ENCODE measurements at regions of chrX and their contacts with region 1.

Region 1: DNA sequence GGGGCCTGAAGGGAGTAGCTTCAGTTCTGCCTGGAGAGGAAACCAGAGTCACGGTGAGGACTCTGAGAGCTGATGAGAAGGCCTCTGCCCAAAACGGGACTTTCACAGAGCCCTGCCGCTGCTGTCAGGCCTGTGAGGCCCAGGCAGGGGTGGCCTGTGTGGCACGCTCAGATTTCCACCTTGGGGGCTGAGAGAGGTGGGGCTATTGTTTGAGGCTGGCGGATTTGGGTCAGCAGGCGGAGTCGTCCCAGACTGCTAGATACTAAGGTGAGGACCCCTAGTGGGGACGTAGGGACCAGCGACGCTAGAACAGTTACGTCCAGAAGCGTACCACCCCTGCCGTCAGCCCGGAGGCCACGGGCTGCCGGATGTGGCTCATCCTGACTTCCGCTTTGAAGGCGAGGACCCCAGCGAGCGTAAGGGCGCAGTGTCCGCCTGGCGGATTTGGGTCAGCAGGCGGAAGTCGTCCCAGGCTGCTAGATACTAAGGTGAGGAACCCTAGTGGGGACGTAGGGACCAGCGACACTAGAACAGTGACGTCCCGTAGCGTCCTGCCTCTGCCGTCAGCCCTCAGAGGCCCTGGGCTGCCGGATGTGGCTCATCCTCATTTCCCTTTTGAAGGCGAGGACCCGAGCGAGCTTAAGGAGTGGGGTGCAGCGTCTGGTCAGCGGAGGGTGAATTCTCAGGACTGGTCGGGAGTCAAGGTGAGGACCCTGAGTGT is at the start of gene MAGEB1:
- DNase-seq: no peak
- ATAC-seq: no peak
- H3K4me3 ChIP-seq: no peak within 1 kb of the TSS
- H3K4me3 Mint-ChIP-seq: no peak within 1 kb of the TSS
- H3K27ac ChIP-seq: no peak within 1 kb of the TSS
- H3K27ac Mint-ChIP-seq: no peak within 1 kb of the TSS
- H3K4me1 ChIP-seq: no peaks in the 10 kb centered on the region
- H3K4me1 Mint-ChIP-seq: no peaks in the 10 kb centered on the region
- H3K27me3 ChIP-seq: no peaks in the 10 kb centered on the region
- H3K27me3 Mint-ChIP-seq: peaks cover 0 to 15% of the 10 kb centered on the region in 2 donors
- total RNA-seq, gene MAGEB1: not detected

Region 2: DNA sequence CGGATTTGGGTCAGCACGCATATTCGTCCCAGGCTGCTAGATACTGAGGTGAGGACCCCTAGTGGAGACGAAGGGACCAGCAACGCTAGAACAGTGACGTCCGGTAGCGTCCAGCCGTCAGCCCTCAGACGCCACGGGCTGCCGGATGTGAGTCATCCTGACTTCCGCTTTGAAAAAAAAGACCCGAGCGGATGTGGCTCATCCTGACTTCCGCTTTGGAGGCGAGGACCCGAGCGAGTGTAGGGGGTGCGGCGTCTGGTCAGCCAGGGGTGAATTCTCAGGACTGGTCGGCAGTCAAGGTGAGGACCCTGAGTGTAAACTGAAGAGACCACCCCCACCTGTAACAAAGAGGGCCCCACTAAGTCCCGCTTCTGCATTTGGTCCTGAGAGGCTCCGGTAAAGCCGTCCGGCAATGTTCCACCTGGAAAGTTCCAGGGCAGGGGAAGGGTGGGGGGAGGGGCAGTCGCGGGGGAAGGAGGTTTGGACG is 31.5 kb before region 1 on chrX and contains the start of gene MAGEB2:
- CTCF ChIA-PET with region 1: interaction called in 1 of 2 experiments, 13 read pairs
- POLR2A ChIA-PET with region 1: no interaction called
- DNase-seq: no peak
- ATAC-seq: no peak
- H3K4me3 ChIP-seq: no peak within 1 kb of the TSS
- H3K4me3 Mint-ChIP-seq: no peak within 1 kb of the TSS
- H3K27ac ChIP-seq: no peak within 1 kb of the TSS
- H3K27ac Mint-ChIP-seq: no peak within 1 kb of the TSS
- H3K4me1 ChIP-seq: no peaks in the 10 kb centered on the region
- H3K4me1 Mint-ChIP-seq: no peaks in the 10 kb centered on the region
- H3K27me3 ChIP-seq: no peaks in the 10 kb centered on the region
- H3K27me3 Mint-ChIP-seq: peaks cover 1 to 8% of the 10 kb centered on the region in 2 donors
- total RNA-seq, gene MAGEB2: 0.25 TPM in 1 of 5 donors, not detected in the others

Region 3: DNA sequence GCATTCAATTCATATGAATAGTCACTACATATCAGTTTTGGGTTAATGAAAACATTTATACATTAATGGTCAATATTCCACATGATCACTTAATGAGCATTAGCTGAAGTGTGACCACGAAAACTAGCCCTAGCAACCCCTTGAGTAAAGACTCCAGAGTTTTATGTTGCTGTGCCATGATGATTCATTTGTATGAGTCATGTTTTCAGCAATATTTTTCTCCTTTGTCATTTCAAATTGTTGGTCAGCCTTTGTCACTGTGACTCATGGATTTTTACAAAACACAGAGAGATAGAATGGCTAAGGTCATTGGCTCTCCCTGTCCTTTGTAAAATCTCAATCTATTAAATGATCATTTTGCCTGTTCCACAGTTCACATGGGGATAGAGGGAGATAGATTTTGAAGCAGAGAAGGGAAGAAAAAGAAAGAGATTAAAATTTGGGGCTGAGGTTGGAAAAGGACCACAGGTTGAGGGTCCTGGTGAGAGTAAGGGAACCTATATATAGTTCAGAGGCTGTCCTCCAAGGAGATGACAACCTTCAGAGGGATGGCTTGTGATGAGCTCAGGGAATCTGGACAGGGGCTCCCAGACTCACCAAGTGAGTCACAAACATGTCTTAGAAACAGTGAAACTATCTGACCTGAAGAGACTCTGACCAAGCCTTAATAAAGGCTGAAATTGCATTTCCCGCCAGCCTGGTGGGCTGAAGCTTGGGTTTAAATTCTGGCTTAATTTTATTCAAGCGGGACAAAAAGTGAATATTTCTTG is 36.7 kb after region 1 on chrX:
- CTCF ChIA-PET with region 1: no interaction called
- POLR2A ChIA-PET with region 1: no interaction called
- DNase-seq: no peak
- ATAC-seq: no peak
- H3K4me3 ChIP-seq: no peak overlapping the region
- H3K4me3 Mint-ChIP-seq: no peak overlapping the region
- H3K27ac ChIP-seq: no peak overlapping the region
- H3K27ac Mint-ChIP-seq: no peak overlapping the region
- H3K4me1 ChIP-seq: peaks cover 0 to 9% of the 10 kb centered on the region in 2 experiments
- H3K4me1 Mint-ChIP-seq: peaks cover 5 to 14% (median 8%) of the 10 kb centered on the region in 3 donors
- H3K27me3 ChIP-seq: no peaks in the 10 kb centered on the region
- H3K27me3 Mint-ChIP-seq: no peaks in the 10 kb centered on the region

Region 4: GRCh38 chrX:31112226-31112999 is 865.5 kb after region 1 on chrX:
- CTCF ChIA-PET with region 1: no interaction called
- POLR2A ChIA-PET with region 1: no interaction called
- DNase-seq: no peak
- ATAC-seq: no peak
- H3K4me3 ChIP-seq: no peak overlapping the region
- H3K4me3 Mint-ChIP-seq: no peak overlapping the region
- H3K27ac ChIP-seq: no peak overlapping the region
- H3K27ac Mint-ChIP-seq: no peak overlapping the region
- H3K4me1 ChIP-seq: no peaks in the 10 kb centered on the region
- H3K4me1 Mint-ChIP-seq: no peaks in the 10 kb centered on the region
- H3K27me3 ChIP-seq: no peaks in the 10 kb centered on the region
- H3K27me3 Mint-ChIP-seq: peaks cover 0 to 18% of the 10 kb centered on the region in 2 donors

Measured in T-cell (primary cell).